ENCODE measurements at regions of chr6 and their contacts with region 1.

Region 1: DNA sequence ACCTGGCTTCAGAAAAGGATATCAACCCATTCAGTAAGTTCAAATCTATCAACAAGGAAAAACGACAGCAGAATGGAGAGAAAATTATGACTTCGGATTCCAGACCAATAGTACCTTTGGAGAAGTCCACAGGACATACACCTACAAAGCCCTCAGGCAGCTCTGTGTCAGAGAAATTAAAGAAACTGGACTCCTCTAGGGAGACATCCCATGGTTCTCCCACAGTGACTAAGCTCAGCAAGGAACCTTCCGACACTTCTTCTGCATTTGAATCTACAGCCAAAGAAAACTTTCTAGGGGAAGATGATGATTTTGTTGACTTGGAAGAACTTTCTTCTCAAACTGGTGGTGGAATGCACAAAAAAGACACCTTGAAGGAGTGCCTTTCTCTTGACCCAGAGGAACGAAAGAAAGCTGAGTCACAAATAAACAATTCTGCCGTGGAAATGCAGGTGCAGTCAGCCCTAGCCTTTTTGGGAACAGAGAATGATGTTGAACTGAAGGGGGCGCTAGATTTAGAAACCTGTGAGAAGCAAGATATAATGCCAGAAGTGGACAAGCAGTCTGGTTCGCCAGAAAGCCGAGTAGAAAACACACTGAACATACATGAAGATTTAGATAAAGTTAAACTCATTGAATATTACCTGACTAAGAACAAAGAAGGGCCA is 67.4 kb upstream of the HINT3 start:
- DNase-seq: no peak
- H3K4me3 ChIP-seq: no peak overlapping the region
- H3K27ac ChIP-seq: no peak overlapping the region
- H3K4me1 ChIP-seq: no peaks in the 10 kb centered on the region
- H3K27me3 ChIP-seq: no peaks in the 10 kb centered on the region
- CTCF ChIP-seq: peak in 2 of 3 experiments; percentile 63 to 74; a peak in 3 of 4 replicates
- EP300 ChIP-seq: no peak
- POLR2A ChIP-seq: no peak
- RAD21 ChIP-seq: peak; percentile 16 to 36; a peak in 3 of 4 replicates

Region 2: DNA sequence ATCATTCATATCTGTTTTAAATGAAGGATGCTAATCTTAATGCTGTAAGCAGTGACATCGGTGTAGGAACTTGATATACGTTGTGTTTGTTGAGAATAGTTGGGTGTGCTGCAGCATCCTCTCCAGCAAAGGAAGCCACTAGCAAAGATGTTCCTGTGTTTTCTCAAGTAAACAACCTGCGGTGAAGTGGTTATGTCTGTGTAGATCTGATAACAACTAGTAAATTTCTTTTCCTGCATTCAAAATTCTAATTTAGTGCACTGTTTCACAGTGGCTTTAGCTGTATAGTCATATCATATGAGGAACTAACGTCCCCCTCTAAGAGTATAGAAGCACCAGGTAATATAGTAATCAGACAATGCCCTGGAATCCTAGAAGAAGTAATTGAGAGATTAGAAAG is 59.7 kb before region 1 on chr6:
- CTCF ChIA-PET with region 1: no interaction called
- POLR2A ChIA-PET with region 1: no interaction called
- DNase-seq: no peak
- H3K4me3 ChIP-seq: no peak overlapping the region
- H3K27ac ChIP-seq: no peak overlapping the region
- H3K4me1 ChIP-seq: no peaks in the 10 kb centered on the region
- H3K27me3 ChIP-seq: no peaks in the 10 kb centered on the region
- CTCF ChIP-seq: no peak
- EP300 ChIP-seq: no peak
- POLR2A ChIP-seq: no peak
- RAD21 ChIP-seq: no peak

Region 3: GRCh38 chr6:125867483-125867935 is 21.6 kb before region 1 on chr6:
- CTCF ChIA-PET with region 1: interaction called, 12 read pairs
- POLR2A ChIA-PET with region 1: no interaction called
- DNase-seq: peak; percentile 53
- H3K4me3 ChIP-seq: peak overlapping the region in 1 of 4 experiments; percentile 8; a peak in 1 of 8 replicates
- H3K27ac ChIP-seq: no peak overlapping the region
- H3K4me1 ChIP-seq: peaks cover 0 to 7% (median 3%) of the 10 kb centered on the region in 4 experiments; a peak in 3 of 7 replicates
- H3K27me3 ChIP-seq: no peaks in the 10 kb centered on the region
- CTCF ChIP-seq: no peak
- EP300 ChIP-seq: no peak
- POLR2A ChIP-seq: no peak
- RAD21 ChIP-seq: no peak

Region 4: DNA sequence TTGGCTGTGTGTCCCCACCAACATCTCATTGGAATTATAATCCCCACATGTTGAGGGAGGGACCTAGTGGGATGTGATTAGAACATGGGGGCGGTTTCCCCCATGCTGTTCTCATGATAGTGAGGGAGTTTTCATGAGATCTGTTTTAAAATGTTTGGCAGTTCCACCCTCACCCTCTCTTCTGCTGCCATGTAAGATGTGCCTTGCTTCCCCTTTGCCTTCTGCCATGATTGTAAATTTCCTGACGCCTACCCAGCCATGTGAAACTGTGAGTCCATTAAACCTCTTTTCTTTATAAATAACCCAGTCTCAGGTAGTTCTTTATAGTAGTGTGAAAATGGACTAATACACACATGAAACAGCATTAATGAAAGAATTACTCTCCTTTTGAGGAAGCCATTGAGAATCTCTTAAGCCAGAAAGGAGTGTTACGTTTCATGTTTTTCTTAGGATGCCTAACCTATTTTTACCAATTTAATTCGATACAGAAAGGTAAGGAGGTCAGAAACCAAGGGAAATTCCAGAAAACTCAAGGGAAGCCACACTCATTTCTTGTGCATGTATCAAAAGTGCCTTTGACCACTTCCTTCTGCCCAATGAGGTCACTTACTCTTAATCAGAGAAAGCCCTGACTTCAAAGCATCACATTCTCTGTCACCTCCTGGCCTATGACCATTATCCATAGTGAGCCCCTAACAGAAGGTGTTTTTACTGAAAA is 42.8 kb after region 1 on chr6:
- CTCF ChIA-PET with region 1: interaction called, 10 read pairs
- POLR2A ChIA-PET with region 1: no interaction called
- DNase-seq: no peak
- H3K4me3 ChIP-seq: no peak overlapping the region
- H3K27ac ChIP-seq: no peak overlapping the region
- H3K4me1 ChIP-seq: no peaks in the 10 kb centered on the region
- H3K27me3 ChIP-seq: no peaks in the 10 kb centered on the region
- CTCF ChIP-seq: no peak
- EP300 ChIP-seq: no peak
- POLR2A ChIP-seq: no peak
- RAD21 ChIP-seq: no peak

Region 5: GRCh38 chr6:125944434-125944816 is 55.3 kb after region 1 on chr6:
- CTCF ChIA-PET with region 1: interaction called, 16 read pairs
- POLR2A ChIA-PET with region 1: no interaction called
- DNase-seq: no peak
- H3K4me3 ChIP-seq: no peak overlapping the region
- H3K27ac ChIP-seq: no peak overlapping the region
- H3K4me1 ChIP-seq: no peaks in the 10 kb centered on the region
- H3K27me3 ChIP-seq: no peaks in the 10 kb centered on the region; a peak in 2 of 7 replicates
- CTCF ChIP-seq: no peak
- EP300 ChIP-seq: no peak
- POLR2A ChIP-seq: no peak
- RAD21 ChIP-seq: no peak